ENCODE measurements at regions of chr4 and their contacts with region 1.

Region 1: GRCh38 chr4:39697740-39698423 is at the start of gene UBE2K:
- DNase-seq: peak; percentile 81 to 93 (median 90)
- ATAC-seq: peak; percentile 89
- H3K4me3 Mint-ChIP-seq: peak within 1 kb of the TSS; percentile 96 to 100 (median 98)
- H3K27ac Mint-ChIP-seq: peak within 1 kb of the TSS; percentile 96 to 100 (median 99)
- H3K4me1 Mint-ChIP-seq: peaks cover 20 to 58% (median 47%) of the 10 kb centered on the region in 4 donors
- H3K27me3 Mint-ChIP-seq: no peaks in the 10 kb centered on the region
- polyA plus RNA-seq, gene UBE2K: 59.7 to 67.5 (median 61.6) TPM

Region 2: GRCh38 chr4:39638354-39639240 is 59.3 kb before region 1 on chr4 and contains the start of gene SMIM14:
- POLR2A ChIA-PET with region 1: interaction called, 17 read pairs
- DNase-seq: peak; percentile 81 to 93 (median 85)
- ATAC-seq: peak; percentile 77 to 83
- H3K4me3 Mint-ChIP-seq: peak within 1 kb of the TSS; percentile 82 to 97 (median 92)
- H3K27ac Mint-ChIP-seq: peak within 1 kb of the TSS; percentile 87 to 98 (median 96)
- H3K4me1 Mint-ChIP-seq: peaks cover 11 to 50% (median 44%) of the 10 kb centered on the region in 4 donors
- H3K27me3 Mint-ChIP-seq: no peaks in the 10 kb centered on the region
- polyA plus RNA-seq, gene SMIM14: 36.5 to 51.9 (median 39.6) TPM

Region 3: GRCh38 chr4:39977489-39978377 is 279.9 kb after region 1 on chr4 and contains the start of gene PDS5A:
- POLR2A ChIA-PET with region 1: interaction called, 18 read pairs
- DNase-seq: peak; percentile 83 to 93 (median 90)
- ATAC-seq: peak; percentile 85
- H3K4me3 Mint-ChIP-seq: peak within 1 kb of the TSS; percentile 85 to 94 (median 90)
- H3K27ac Mint-ChIP-seq: peak within 1 kb of the TSS; percentile 82 to 98 (median 96)
- H3K4me1 Mint-ChIP-seq: peaks cover 16 to 33% (median 30%) of the 10 kb centered on the region in 4 donors
- H3K27me3 Mint-ChIP-seq: no peaks in the 10 kb centered on the region
- polyA plus RNA-seq, gene PDS5A: 31.1 to 46.7 (median 32.4) TPM